ENCODE measurements at regions of chr9 and their contacts with region 1.

Region 1: GRCh38 chr9:35116898-35117551 is 1.4 kb upstream of the ATOSB start:
- DNase-seq: peak; percentile 89
- ATAC-seq: peak; percentile 53
- H3K4me3 ChIP-seq: peak overlapping the region; percentile 83
- H3K27ac ChIP-seq: peak overlapping the region; percentile 36
- H3K4me1 ChIP-seq: peaks cover 32% of the 10 kb centered on the region
- H3K27me3 ChIP-seq: no peaks in the 10 kb centered on the region
- CTCF ChIP-seq: peak; percentile 87

Region 2: GRCh38 chr9:35168963-35169362 is 51.9 kb after region 1 on chr9:
- CTCF ChIA-PET with region 1: no interaction called
- POLR2A ChIA-PET with region 1: no interaction called
- intact Hi-C with region 1: no loop called
- DNase-seq: no peak
- ATAC-seq: no peak
- H3K4me3 ChIP-seq: no peak overlapping the region
- H3K27ac ChIP-seq: no peak overlapping the region
- H3K4me1 ChIP-seq: peaks cover 8% of the 10 kb centered on the region
- H3K27me3 ChIP-seq: no peaks in the 10 kb centered on the region
- CTCF ChIP-seq: no peak

Region 3: GRCh38 chr9:35179347-35180287 is 62.6 kb after region 1 on chr9:
- CTCF ChIA-PET with region 1: no interaction called
- POLR2A ChIA-PET with region 1: no interaction called
- intact Hi-C with region 1: loop called (anchors 5 kb)
- DNase-seq: peak; percentile 57
- ATAC-seq: peak; percentile 79
- H3K4me3 ChIP-seq: 0 out of 2 replicates have a peak overlapping the region, but pooled peaks have one; percentile 14
- H3K27ac ChIP-seq: peak overlapping the region; percentile 94
- H3K4me1 ChIP-seq: peaks cover 23% of the 10 kb centered on the region
- H3K27me3 ChIP-seq: no peaks in the 10 kb centered on the region
- CTCF ChIP-seq: no peak

Region 4: GRCh38 chr9:35481347-35481975 is 364.4 kb after region 1 on chr9:
- CTCF ChIA-PET with region 1: no interaction called
- POLR2A ChIA-PET with region 1: interaction called, 3 read pairs
- intact Hi-C with region 1: loop called (anchors 1 kb)
- DNase-seq: peak; percentile 74
- ATAC-seq: peak; percentile 54; the same call in 1 of the 2 replicates
- H3K4me3 ChIP-seq: no peak overlapping the region
- H3K27ac ChIP-seq: no peak overlapping the region
- H3K4me1 ChIP-seq: peaks cover 6% of the 10 kb centered on the region; the same call in 1 of the 2 replicates
- H3K27me3 ChIP-seq: no peaks in the 10 kb centered on the region
- CTCF ChIP-seq: peak; percentile 74